HEK293 (cell line): ENCODE measurements at regions of chr12 and their contacts with region 1.

Region 1: DNA sequence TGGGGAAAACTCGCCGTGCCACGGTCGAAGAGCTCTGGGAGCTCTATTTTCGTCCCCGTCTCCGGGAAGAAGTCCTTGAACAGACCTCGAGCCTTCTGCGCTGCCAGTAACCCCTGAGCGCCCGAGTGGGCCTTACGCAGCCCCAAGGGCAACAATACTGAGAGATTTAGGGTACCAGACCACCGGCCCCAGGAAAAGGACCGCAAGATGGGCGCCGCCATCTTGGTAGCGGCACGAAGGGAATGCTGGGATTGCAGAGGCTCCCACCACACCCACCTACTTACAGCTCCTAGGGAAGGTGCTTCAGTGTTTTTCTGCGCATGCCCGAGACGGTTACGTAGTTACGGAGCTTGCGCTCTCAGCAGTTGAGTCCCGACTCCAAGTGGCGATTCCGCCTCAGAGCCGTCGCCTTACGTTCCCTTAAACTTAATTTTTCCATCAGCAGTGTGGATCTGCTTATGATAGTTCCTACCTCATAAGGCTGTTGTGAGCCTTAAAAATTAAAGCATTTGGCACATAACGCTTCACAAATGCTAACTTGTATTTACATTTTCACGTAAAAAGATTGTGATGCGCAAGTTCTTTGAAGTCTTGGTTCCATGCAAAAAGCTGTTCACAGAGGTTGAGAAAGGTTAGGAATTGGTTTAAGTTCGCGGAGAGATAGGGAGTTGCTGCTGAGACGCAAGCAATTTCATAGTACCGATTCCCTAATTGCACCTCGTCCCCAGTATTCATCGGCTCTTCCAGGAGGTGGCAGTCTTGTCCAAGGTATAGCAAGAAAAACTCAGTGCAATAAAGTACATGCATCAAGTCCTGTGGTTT is at the start of gene YARS2:
- H3K4me3 ChIP-seq: peak within 1 kb of the TSS; percentile 95
- H3K27ac ChIP-seq: peak within 1 kb of the TSS; percentile 50
- H3K4me1 ChIP-seq: peaks cover 2% of the 10 kb centered on the region; the same call in 1 of the 2 replicates
- CTCF ChIP-seq: peak; percentile 90

Region 2: GRCh38 chr12:32770141-32770540 is 14.3 kb after region 1 on chr12:
- CTCF ChIA-PET with region 1: interaction called, 11 read pairs
- POLR2A ChIA-PET with region 1: interaction called, 5 read pairs
- H3K4me3 ChIP-seq: no peak overlapping the region
- H3K27ac ChIP-seq: no peak overlapping the region
- H3K4me1 ChIP-seq: no peaks in the 10 kb centered on the region
- CTCF ChIP-seq: no peak

Region 3: DNA sequence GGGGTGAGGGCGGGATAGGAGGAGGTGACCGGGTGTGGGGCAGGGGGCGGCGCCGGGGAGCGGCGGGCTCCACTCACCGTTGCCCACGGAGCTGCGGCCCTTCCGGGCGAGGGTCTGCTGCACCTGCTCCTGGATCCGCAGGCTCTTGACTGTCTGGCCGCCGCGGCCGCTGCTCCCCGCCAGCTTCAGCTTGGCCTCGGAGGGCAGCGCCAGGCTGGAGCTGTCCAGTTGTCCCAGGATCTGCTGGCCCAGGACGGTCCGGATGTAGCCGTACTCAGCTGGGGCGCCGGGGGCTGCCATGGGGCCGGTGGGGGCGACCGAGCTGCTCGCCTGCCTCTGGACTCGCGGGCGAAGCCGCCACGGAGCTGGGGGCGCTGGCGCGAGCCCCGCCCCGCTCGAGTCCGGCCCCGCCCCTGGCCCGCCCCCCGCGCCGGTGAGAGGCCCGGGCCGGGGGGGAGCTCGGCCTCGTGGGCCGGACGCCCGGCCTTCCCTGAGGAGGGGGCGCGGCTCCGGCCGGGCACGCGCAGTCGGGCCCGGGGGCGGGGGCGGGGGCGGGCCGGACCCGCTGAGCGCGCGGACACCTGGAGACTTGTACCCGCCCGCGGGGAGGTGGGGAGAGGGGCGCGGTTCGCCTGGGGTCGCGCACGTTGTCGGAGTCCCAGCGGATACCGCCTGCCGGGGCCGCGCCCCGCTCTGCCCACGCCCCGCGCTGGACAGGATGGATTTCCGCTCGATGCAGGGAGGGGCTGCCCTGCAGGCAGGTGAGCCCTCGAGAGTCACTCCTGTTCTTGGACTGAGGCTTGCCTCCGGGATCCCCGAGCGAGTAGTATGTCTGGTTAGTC is 140.8 kb after region 1 on chr12 and contains the start of gene PKP2:
- CTCF ChIA-PET with region 1: interaction called, 5 read pairs
- POLR2A ChIA-PET with region 1: interaction called, 11 read pairs
- H3K4me3 ChIP-seq: peak within 1 kb of the TSS; percentile 91
- H3K27ac ChIP-seq: peak within 1 kb of the TSS; percentile 58; the same call in 1 of the 2 replicates
- H3K4me1 ChIP-seq: peaks cover 31% of the 10 kb centered on the region
- CTCF ChIP-seq: peak; percentile 47

Region 4: GRCh38 chr12:32918890-32919801 is 163.3 kb after region 1 on chr12:
- CTCF ChIA-PET with region 1: interaction called, 66 read pairs
- POLR2A ChIA-PET with region 1: interaction called, 8 read pairs
- H3K4me3 ChIP-seq: no peak overlapping the region
- H3K27ac ChIP-seq: no peak overlapping the region
- H3K4me1 ChIP-seq: peaks cover 9% of the 10 kb centered on the region
- CTCF ChIP-seq: peak; percentile 42; the same call in 1 of the 2 replicates